Caco-2 (cell line): ENCODE measurements at regions of chr20 and their contacts with region 1.

Region 1: GRCh38 chr20:41339507-41340326 is 904 bp upstream of the LPIN3 start:
- DNase-seq: peak; percentile 98 to 100
- H3K4me3 ChIP-seq: peak overlapping the region; percentile 51
- H3K4me3 Mint-ChIP-seq: peak overlapping the region; percentile 96
- H3K27ac Mint-ChIP-seq: peak overlapping the region; percentile 69
- H3K4me1 ChIP-seq: peaks cover 25% of the 10 kb centered on the region
- H3K4me1 Mint-ChIP-seq: peaks cover 21% of the 10 kb centered on the region
- H3K27me3 ChIP-seq: no peaks in the 10 kb centered on the region
- H3K27me3 Mint-ChIP-seq: no peaks in the 10 kb centered on the region
- CTCF ChIP-seq: peak; percentile 99 to 100

Region 2: DNA sequence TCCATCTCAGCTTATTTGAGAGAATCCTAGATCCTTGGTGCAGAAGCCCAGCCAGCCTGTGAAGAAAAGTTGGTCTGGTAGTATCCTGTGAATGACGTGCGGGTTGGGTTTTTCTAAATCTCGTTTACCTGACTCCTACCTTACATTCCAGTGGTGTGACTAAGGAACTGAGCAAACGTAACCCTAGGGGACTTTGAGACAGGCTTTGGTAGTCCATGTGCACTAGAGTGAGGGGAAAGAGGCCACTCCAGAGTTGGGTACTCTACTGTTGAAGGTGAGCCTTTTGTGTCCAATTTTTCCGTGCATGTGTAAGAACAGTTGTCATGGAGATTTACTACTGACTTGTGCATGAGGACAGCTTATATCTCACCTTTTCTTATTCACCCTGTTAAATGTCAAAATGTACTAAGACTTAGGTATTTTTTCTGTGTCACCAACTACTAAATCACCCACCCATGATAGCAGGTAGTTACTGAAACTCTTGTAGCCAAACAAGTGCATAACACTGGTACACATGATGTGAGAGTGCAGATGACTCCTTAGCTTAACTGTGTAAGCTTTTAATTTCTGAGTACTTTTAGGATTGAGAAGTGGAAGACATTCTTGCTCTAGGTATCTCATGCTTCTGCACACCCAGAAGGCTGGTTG is 228.7 kb before region 1 on chr20:
- CTCF ChIA-PET with region 1: interaction called, 5 read pairs
- POLR2A ChIA-PET with region 1: interaction called, 16 read pairs
- intact Hi-C with region 1: no loop called
- DNase-seq: peak; percentile 88 to 90
- H3K4me3 ChIP-seq: no peak overlapping the region
- H3K4me3 Mint-ChIP-seq: peak overlapping the region; percentile 42
- H3K27ac Mint-ChIP-seq: peak overlapping the region; percentile 91
- H3K4me1 ChIP-seq: peaks cover 30% of the 10 kb centered on the region
- H3K4me1 Mint-ChIP-seq: peaks cover 30% of the 10 kb centered on the region
- H3K27me3 ChIP-seq: no peaks in the 10 kb centered on the region
- H3K27me3 Mint-ChIP-seq: no peaks in the 10 kb centered on the region
- CTCF ChIP-seq: no peak

Region 3: GRCh38 chr20:41249406-41250281 is 90.1 kb before region 1 on chr20:
- CTCF ChIA-PET with region 1: interaction called, 64 read pairs
- POLR2A ChIA-PET with region 1: interaction called, 3 read pairs
- intact Hi-C with region 1: loop called (anchors 1 kb)
- DNase-seq: peak; percentile 71 to 73
- H3K4me3 ChIP-seq: no peak overlapping the region
- H3K4me3 Mint-ChIP-seq: no peak overlapping the region
- H3K27ac Mint-ChIP-seq: no peak overlapping the region
- H3K4me1 ChIP-seq: no peaks in the 10 kb centered on the region
- H3K4me1 Mint-ChIP-seq: no peaks in the 10 kb centered on the region
- H3K27me3 ChIP-seq: no peaks in the 10 kb centered on the region
- H3K27me3 Mint-ChIP-seq: no peaks in the 10 kb centered on the region
- CTCF ChIP-seq: peak; percentile 50 to 57

Region 4: GRCh38 chr20:41287327-41287726 is 52.4 kb before region 1 on chr20:
- CTCF ChIA-PET with region 1: no interaction called
- POLR2A ChIA-PET with region 1: no interaction called
- intact Hi-C with region 1: no loop called
- DNase-seq: no peak
- H3K4me3 ChIP-seq: no peak overlapping the region
- H3K4me3 Mint-ChIP-seq: no peak overlapping the region
- H3K27ac Mint-ChIP-seq: no peak overlapping the region
- H3K4me1 ChIP-seq: no peaks in the 10 kb centered on the region
- H3K4me1 Mint-ChIP-seq: no peaks in the 10 kb centered on the region
- H3K27me3 ChIP-seq: no peaks in the 10 kb centered on the region
- H3K27me3 Mint-ChIP-seq: no peaks in the 10 kb centered on the region
- CTCF ChIP-seq: no peak

Region 5: DNA sequence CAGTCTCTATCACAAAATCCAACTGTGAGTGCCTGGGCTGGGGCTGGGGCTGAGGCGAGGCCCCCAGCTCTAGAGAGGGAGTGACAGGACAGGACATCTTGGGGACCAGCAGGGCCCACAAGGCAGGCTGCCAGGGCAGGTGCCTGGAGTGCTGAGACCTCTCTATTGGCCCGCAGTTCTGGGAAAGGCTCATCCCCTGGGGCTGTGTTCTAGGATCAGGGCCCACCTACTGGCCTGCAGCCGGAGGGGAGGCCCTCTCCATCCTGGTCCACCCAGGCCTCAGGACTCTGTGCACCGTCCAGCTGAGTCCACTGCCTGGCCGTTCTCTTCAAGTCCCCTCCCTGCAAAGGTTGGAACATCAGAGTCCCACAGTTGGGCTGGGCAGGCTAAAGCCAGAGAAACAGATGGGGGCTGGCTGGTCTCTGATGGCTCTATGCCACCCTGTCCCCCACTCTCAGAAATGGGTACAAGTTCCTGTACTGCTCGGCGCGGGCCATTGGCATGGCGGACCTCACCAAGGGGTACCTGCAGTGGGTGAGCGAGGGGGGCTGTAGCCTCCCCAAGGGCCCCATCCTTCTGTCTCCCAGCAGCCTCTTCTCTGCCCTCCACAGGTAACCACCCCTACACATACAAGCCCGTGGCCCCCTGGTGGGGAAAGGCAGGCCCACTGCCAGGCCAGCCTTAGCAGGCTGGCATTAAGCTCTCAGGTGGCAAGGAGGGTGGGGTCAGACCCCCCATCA is 17.9 kb after region 1 on chr20:
- CTCF ChIA-PET with region 1: interaction called, 36 read pairs
- POLR2A ChIA-PET with region 1: interaction called, 8 read pairs
- intact Hi-C with region 1: loop called (anchors 2 kb)
- DNase-seq: no peak
- H3K4me3 ChIP-seq: no peak overlapping the region
- H3K4me3 Mint-ChIP-seq: no peak overlapping the region
- H3K27ac Mint-ChIP-seq: no peak overlapping the region
- H3K4me1 ChIP-seq: no peaks in the 10 kb centered on the region
- H3K4me1 Mint-ChIP-seq: no peaks in the 10 kb centered on the region
- H3K27me3 ChIP-seq: no peaks in the 10 kb centered on the region
- H3K27me3 Mint-ChIP-seq: no peaks in the 10 kb centered on the region
- CTCF ChIP-seq: peak; percentile 29 to 39

Region 6: GRCh38 chr20:41499961-41500725 is 160.4 kb after region 1 on chr20:
- CTCF ChIA-PET with region 1: interaction called, 10 read pairs
- POLR2A ChIA-PET with region 1: no interaction called
- intact Hi-C with region 1: no loop called
- DNase-seq: no peak
- H3K4me3 ChIP-seq: no peak overlapping the region
- H3K4me3 Mint-ChIP-seq: no peak overlapping the region
- H3K27ac Mint-ChIP-seq: no peak overlapping the region
- H3K4me1 ChIP-seq: peaks cover 14% of the 10 kb centered on the region
- H3K4me1 Mint-ChIP-seq: peaks cover 14% of the 10 kb centered on the region
- H3K27me3 ChIP-seq: no peaks in the 10 kb centered on the region
- H3K27me3 Mint-ChIP-seq: no peaks in the 10 kb centered on the region
- CTCF ChIP-seq: no peak

Region 7: GRCh38 chr20:41654884-41655283 is 315.2 kb after region 1 on chr20:
- CTCF ChIA-PET with region 1: no interaction called
- POLR2A ChIA-PET with region 1: interaction called, 7 read pairs
- intact Hi-C with region 1: loop called (anchors 1 kb)
- DNase-seq: peak; percentile 67 to 79
- H3K4me3 ChIP-seq: no peak overlapping the region
- H3K4me3 Mint-ChIP-seq: no peak overlapping the region
- H3K27ac Mint-ChIP-seq: no peak overlapping the region
- H3K4me1 ChIP-seq: peaks cover 25% of the 10 kb centered on the region
- H3K4me1 Mint-ChIP-seq: peaks cover 23% of the 10 kb centered on the region
- H3K27me3 ChIP-seq: no peaks in the 10 kb centered on the region
- H3K27me3 Mint-ChIP-seq: no peaks in the 10 kb centered on the region
- CTCF ChIP-seq: no peak

Region 8: DNA sequence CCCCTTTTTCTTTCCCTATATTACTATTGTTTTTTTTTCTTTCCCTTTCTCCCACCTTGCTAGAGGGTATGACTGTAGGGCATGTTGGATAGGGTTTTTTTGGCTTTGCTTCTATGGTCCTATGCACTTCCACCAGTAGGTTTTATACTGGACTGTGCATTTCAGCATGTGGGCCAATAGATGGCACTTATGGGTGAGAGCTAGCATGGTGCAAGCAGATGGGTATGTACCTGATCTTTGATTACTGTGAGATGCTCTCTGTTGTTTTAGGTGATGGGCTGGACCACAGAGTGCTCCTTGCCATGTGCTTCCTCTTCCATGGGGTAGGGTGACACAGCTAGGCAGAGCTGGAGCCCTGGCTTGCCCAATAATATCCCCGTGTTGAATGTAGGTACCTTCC is 406.9 kb after region 1 on chr20:
- CTCF ChIA-PET with region 1: no interaction called
- POLR2A ChIA-PET with region 1: no interaction called
- intact Hi-C with region 1: no loop called
- DNase-seq: no peak
- H3K4me3 ChIP-seq: no peak overlapping the region
- H3K4me3 Mint-ChIP-seq: no peak overlapping the region
- H3K27ac Mint-ChIP-seq: no peak overlapping the region
- H3K4me1 ChIP-seq: no peaks in the 10 kb centered on the region
- H3K4me1 Mint-ChIP-seq: no peaks in the 10 kb centered on the region
- H3K27me3 ChIP-seq: no peaks in the 10 kb centered on the region; the same call in 1 of the 2 replicates
- H3K27me3 Mint-ChIP-seq: peaks cover 38% of the 10 kb centered on the region
- CTCF ChIP-seq: peak; percentile 49 to 56